Ovary (tissue), 10 donors: ENCODE measurements at regions of chr19 and their contacts with region 1.

Region 1: DNA sequence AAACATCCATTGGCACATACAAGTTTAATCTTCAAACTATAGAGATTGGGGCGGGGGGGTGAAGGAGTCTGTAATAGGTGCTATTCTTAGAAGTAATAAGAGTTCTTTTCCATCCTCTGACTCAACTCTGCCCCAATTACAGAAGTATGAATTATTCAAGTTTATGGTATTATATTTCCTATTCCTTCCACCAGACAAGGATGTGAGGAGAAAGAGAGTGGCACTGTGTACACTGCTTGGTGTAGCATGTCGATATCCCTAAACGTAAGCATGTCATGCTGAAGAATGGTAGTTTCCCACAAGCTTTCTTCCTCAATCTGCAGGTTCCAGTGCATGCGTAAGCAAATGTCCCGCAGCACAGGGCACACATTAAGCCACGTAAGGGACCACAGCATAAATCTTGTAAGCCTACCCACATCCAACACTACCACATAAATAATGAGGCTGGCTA is 14.1 kb downstream of the BRD4 start:
- DNase-seq: peak in 1 of 5 donors; percentile 14
- H3K4me3 ChIP-seq: no peak overlapping the region
- H3K27ac ChIP-seq: no peak overlapping the region
- H3K4me1 ChIP-seq: peaks cover 41% of the 10 kb centered on the region
- H3K27me3 ChIP-seq: no peaks in the 10 kb centered on the region
- CTCF ChIP-seq: no peak
- EP300 ChIP-seq: no peak
- POLR2A ChIP-seq: no peak

Region 2: DNA sequence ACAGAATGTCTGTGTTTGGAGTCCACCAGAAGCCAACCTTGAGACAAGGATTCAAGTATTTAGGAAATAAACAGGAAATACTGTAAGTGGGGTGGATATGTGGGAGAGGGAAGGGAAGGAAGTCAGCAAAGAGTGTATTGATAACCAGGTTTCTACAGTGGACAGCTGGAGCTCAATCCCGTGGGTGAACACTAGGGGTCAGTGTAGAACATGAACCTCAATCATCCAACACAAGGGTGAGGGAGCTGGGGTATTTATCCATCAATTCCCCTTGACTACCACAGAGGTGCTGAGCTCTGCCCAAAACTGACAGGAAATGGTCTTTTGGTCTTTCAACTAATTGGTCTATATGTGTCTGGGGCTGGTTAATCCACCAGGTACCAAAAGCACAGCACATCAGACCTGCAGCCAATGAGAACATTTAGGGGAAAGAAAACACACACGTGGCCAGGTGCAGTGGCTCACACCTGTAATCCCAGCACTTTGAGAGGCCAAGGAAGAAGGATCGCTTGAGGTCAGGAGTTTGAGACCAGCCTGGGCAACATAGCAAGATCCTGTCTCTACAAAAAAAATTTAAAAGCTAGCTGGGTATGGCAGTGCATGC is 216.7 kb before region 1 on chr19:
- intact Hi-C with region 1: no loop called
- DNase-seq: no peak
- H3K4me3 ChIP-seq: no peak overlapping the region
- H3K27ac ChIP-seq: no peak overlapping the region
- H3K4me1 ChIP-seq: no peaks in the 10 kb centered on the region
- H3K27me3 ChIP-seq: no peaks in the 10 kb centered on the region
- CTCF ChIP-seq: no peak
- EP300 ChIP-seq: no peak
- POLR2A ChIP-seq: no peak

Region 3: GRCh38 chr19:15280915-15281683 is 37.2 kb before region 1 on chr19:
- intact Hi-C with region 1: loop called in 1 of 4 experiments (anchors 5 kb)
- DNase-seq: peak; percentile 78 to 85 (median 80)
- H3K4me3 ChIP-seq: no peak overlapping the region
- H3K27ac ChIP-seq: peak overlapping the region in 1 of 2 donors; percentile 22
- H3K4me1 ChIP-seq: peaks cover 63% of the 10 kb centered on the region
- H3K27me3 ChIP-seq: no peaks in the 10 kb centered on the region
- CTCF ChIP-seq: no peak
- EP300 ChIP-seq: no peak
- POLR2A ChIP-seq: no peak

Region 4: DNA sequence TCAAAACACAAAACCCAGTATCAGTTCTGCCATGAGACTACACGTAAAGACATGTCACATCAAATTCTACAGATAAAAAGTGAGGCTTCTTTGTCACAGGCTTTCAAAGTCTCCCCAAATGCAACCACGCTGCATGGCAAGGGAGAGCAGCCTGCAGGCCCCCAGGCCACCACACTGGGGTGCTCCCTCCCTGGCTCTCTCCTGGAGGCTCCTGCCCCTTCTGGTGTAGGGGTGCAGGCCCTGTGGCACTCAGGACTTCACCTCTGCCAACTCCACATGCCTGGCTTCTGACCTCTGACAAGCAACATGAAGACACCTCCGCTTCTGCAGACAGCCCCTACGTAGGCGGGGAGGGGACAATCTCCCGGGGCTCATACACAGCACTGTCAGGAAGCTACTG is 47.0 kb after region 1 on chr19:
- intact Hi-C with region 1: no loop called
- DNase-seq: no peak
- H3K4me3 ChIP-seq: no peak overlapping the region
- H3K27ac ChIP-seq: no peak overlapping the region
- H3K4me1 ChIP-seq: no peaks in the 10 kb centered on the region
- H3K27me3 ChIP-seq: no peaks in the 10 kb centered on the region
- CTCF ChIP-seq: no peak
- EP300 ChIP-seq: no peak
- POLR2A ChIP-seq: no peak